Tibial artery (tissue), 4 donors: ENCODE measurements at regions of chr4 and their contacts with region 1.

Region 1: GRCh38 chr4:167290678-167291077 is 56.4 kb upstream of the SPOCK3 start:
- DNase-seq: no peak
- H3K4me3 ChIP-seq: no peak overlapping the region
- H3K27ac ChIP-seq: no peak overlapping the region
- H3K4me1 ChIP-seq: no peaks in the 10 kb centered on the region
- H3K27me3 ChIP-seq: no peaks in the 10 kb centered on the region
- CTCF ChIP-seq: peak in 1 of 2 experiments; percentile 5

Region 2: DNA sequence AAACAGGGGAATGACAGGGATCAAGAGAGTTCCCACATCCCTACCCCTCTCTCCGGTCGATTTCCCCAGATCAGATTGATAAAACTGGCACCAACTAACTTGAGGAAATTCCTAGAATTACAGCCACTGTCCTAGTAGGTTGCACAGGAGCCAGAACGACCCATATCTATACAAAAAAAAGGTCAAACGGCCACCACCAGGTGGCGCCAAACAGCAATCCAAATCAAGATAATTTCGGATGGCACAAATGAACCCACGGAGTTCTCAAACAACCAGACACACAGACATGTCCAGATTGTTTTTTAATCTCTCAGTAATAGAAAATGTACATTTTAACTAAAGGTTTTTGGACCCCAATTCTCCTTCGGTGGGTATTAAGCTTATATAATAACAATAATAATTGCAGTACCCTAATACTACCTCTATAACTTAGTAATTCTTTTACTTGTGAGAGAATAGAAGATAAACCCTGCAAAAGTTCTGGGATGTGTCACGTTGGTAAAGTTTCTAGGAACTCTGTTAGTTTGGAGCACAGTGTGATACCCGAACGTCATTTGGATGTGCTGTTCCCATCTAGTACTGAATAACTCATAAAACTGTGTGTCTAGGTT is 269.0 kb before region 1 on chr4:
- intact Hi-C with region 1: loop called (anchors 5 kb)
- DNase-seq: peak; percentile 66 to 70
- H3K4me3 ChIP-seq: no peak overlapping the region
- H3K27ac ChIP-seq: no peak overlapping the region
- H3K4me1 ChIP-seq: no peaks in the 10 kb centered on the region
- H3K27me3 ChIP-seq: no peaks in the 10 kb centered on the region
- CTCF ChIP-seq: peak; percentile 52 to 67